ENCODE measurements at regions of chr4 and their contacts with region 1.

Region 1: GRCh38 chr4:17552427-17552826 is 24.6 kb upstream of the LAP3 start:
- DNase-seq: no peak
- ATAC-seq: no peak

Region 2: DNA sequence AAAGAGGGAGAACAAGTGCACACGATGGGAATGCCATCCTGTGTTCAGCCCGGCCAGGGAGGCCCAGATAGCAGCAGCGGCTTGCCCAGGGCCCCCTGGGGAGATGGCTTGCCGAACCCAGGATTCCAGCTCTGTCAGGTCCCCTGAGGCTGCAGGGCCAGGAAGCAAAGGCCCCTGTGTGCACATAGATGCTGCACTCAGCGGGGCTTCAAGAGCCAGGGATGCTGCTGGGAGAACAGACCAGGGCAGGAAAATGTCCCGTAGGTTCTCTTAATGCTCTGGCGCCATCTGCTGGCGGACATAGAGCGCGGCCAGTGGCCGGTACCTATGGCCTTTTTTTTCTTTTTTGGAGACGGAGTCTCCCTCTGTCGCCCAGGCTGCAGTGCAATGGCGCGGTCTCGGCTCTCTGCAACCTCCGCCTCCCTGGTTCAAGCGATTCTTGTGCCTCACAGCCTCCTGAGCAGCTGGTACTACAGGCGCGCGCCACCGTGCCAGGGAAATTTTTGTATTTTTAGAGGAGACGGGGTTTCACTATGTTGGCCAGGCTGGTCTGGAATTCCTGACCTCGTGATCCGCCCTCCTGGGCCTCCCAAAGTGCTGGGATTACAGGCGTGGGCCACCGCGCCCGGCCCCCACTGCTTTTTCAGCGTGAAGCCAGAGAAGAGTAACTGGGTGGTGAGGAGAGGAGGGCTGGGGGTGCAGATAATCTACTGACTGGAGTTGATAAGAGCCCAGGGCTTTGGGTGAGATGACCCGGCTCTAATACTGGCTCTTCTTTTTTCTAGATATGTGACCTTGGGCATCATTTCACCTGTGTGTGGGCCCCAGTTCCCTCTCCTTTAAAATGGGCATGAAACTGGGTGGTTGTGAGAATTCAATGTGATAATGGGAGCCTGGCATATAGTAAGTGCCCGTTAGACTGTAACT is 84.5 kb after region 1 on chr4:
- intact Hi-C with region 1: loop called (anchors 2 to 5 kb)
- DNase-seq: peak; percentile 82
- ATAC-seq: peak; percentile 87 to 89

Region 3: DNA sequence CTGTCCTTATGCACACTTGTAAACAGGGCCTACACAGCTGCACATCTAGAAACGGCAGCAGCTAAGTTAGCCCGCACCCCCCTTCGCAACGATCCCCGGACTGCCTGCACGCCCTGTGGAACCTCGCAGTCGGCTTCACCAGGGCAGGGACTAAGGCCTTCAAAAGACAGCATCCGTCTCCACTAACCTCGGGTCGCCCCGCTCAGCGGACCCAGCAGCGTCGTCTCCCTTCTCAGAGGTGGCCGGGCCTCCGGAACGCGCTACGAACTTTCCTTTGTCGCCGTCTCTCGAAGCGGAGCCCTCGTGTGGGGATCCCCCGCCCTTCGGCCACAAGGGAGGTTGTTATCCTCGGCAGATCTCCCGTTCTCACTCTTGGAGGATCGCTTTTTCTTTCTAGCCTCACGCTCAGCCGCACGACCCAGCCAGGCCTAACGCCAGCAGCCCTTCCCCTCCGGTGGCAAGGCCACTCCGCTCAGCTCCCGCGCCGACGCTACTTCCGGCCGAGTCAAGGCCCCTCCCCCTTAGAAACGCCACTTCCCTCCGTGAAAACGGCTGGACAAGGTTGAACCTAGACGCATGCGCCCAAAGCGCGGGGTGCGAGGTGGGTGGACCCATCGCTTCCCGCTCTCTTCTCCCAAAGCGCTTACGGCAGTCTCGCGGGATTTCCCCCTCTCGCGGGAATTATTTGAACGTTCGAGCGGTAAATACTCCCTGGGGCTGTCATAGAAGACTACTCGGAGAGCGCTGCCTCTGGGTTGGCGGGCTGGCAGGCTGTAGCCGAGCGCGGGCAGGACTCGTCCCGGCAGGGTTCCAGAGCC is 258.0 kb after region 1 on chr4 and contains the starts of genes DCAF16 and NCAPG:
- intact Hi-C with region 1: loop called in 1 of 2 experiments (anchors 5 kb)
- DNase-seq: peak; percentile 99
- ATAC-seq: peak; percentile 100
- total RNA-seq, gene DCAF16: 15.4 to 21.2 TPM
- total RNA-seq, gene NCAPG: 0.24 to 1.8 TPM

Region 4: DNA sequence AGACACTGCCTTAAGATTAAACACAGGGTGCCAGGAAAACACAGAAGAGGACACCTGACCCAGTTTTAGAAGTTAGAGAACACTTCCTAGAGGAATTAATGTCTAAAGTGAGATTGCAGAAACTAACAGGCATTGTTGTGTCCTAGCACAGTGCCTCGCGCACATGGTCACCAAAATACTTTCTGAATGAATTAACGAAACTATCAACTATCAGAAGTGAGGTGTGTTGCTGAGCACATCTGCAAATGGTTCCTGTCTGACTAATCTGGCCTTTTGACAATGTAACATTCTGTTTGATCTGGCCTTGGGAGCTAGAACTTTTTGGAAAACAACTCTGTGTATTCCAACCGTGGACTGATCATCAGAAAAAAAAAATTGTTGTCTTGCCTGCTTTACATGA is 1025.9 kb after region 1 on chr4:
- intact Hi-C with region 1: loop called in 1 of 2 experiments (anchors 10 kb)
- DNase-seq: no peak
- ATAC-seq: no peak

Region 5: GRCh38 chr4:18593445-18594002 is 1041.1 kb after region 1 on chr4:
- intact Hi-C with region 1: loop called (anchors 5 to 10 kb)
- DNase-seq: peak; percentile 24
- ATAC-seq: peak; percentile 34 to 53

Measured in left cardiac atrium (tissue), 4 donors.